Right cardiac atrium (tissue), 5 donors: ENCODE measurements at regions of chr11 and their contacts with region 1.

Region 1: DNA sequence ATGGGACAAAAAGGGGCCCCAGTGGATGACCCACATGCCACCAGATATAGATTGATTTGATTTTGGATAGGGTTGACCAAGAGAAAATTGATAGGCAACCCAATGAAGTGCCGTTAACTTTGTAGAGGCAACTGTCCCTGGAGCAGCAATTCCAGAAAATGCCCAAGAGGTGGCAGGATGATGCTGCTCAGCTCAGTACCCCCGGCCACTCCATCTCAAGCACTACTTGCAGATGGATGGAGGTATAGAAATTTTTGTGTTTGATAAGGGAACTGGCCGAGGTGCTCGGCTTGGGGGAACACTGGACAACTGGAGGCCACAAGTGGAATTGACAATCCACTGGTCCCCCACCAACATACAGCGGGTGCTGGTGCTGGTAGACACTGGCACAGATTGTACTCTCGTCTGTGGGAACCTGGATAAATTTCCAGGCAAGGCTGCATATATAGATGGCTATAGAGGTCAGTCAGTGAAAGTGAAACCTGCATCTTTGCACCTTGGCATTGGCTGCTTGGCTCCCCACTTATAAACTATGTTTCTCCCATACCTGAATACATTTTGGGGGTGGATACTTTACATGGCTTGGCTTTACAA is 86.3 kb downstream of the CCDC83 start:
- DNase-seq: peak; percentile 41 to 71 (median 53)
- ATAC-seq: peak; percentile 75 to 77
- H3K4me3 ChIP-seq: no peak overlapping the region
- H3K27ac ChIP-seq: no peak overlapping the region
- H3K4me1 ChIP-seq: peaks cover 3% of the 10 kb centered on the region
- H3K27me3 ChIP-seq: no peaks in the 10 kb centered on the region

Region 2: DNA sequence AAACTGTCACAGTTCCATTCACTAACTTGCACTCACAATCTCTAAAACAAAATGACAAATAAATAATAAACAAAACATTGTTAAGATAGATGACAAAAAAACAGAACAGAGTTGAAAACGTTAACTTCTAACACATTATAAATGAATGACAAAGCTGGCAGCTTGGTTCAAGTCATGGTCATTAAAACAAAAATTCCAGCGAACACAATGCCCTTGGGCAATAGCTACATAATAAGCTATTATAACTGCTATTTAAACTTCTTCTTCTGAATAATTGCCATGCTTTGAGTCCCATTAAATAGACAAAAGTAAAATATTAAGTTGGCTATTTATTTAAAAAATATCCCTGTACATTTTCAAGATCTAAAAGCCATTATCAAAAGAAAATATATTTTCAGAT is 72.7 kb after region 1 on chr11:
- intact Hi-C with region 1: loop called in 1 of 4 experiments (anchors 10 kb)
- DNase-seq: no peak
- ATAC-seq: no peak
- H3K4me3 ChIP-seq: no peak overlapping the region
- H3K27ac ChIP-seq: no peak overlapping the region
- H3K4me1 ChIP-seq: no peaks in the 10 kb centered on the region
- H3K27me3 ChIP-seq: no peaks in the 10 kb centered on the region

Region 3: DNA sequence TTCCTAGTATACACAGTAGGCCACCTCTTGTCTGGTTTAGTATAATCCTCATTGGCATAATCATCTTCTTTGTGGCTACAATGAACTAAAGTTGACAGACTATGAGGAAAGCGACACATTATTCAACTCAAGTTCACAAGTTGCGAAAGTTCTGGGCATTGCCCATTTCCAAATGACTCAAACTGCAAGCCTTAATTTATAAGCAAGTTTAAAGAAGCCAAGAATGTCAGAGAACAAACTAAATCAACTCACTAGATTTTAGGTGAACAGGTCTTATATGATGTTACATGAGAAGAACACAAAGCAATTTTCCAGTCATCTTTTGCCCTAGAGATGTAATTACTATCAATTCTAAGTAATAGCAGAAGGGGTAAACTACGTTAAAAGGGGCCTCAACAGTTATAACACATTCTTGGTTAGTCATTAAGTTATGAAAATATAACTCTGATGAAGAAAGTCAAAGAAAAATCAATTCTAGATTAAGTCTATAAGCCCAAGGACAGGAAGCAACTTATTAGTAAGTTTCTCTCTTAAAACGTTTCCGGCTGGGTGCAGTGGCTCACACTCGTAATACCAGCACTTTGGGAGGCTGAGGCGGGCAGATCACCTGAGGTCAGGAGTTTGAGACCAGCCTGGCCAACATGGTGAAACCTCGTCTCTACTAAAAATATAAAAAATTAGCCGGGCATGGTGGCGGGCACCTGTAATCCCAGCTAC is 106.0 kb after region 1 on chr11:
- intact Hi-C with region 1: no loop called
- DNase-seq: no peak
- ATAC-seq: no peak
- H3K4me3 ChIP-seq: no peak overlapping the region
- H3K27ac ChIP-seq: no peak overlapping the region
- H3K4me1 ChIP-seq: peaks cover 11% of the 10 kb centered on the region
- H3K27me3 ChIP-seq: no peaks in the 10 kb centered on the region

Region 4: GRCh38 chr11:86218125-86219084 is 276.9 kb after region 1 on chr11:
- intact Hi-C with region 1: loop called (anchors 2 to 10 kb)
- DNase-seq: peak; percentile 59 to 84 (median 73)
- ATAC-seq: peak; percentile 90 to 91
- H3K4me3 ChIP-seq: peak overlapping the region; percentile 50
- H3K27ac ChIP-seq: no peak overlapping the region
- H3K4me1 ChIP-seq: no peaks in the 10 kb centered on the region
- H3K27me3 ChIP-seq: no peaks in the 10 kb centered on the region

Region 5: DNA sequence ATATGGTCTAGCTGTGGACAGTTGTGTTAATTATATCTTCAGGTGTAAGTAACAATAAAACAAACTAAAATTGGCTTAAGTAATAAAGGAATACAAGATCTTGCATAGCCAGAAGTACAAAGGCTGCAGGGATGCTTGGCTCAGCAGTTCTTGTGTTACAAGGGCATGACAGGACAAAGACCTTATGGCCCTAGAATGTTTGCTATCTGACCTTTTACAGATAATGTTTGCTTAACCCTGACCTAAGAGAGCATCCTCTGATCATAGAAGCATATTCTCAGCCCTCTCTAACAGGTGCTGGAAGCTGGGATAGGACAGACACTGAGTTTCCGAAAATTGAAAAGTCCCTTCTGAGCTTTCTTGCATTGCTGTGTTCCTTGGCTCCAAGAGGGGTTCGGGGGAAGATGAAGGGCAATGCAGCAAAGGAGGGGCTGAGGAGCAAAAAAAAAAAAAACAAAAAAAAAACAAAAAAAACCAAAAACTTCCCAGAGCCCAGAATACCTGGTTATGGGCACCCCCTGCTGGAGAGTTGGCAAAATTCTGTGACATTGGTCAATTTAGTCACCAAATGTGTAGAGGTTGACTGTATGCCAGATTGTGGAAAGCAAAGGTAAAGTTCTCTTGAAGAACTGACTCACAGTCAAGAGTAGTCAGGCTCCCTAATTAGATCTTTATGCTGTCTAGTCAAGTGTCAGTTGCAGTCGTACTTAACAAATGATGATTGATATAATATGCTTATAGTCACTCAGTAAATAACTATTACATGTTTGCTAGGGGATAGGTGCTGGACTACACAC is 350.2 kb after region 1 on chr11:
- intact Hi-C with region 1: loop called in 1 of 4 experiments (anchors 5 kb)
- DNase-seq: peak in 1 of 3 donors; percentile 71
- ATAC-seq: no peak
- H3K4me3 ChIP-seq: no peak overlapping the region
- H3K27ac ChIP-seq: no peak overlapping the region
- H3K4me1 ChIP-seq: no peaks in the 10 kb centered on the region
- H3K27me3 ChIP-seq: no peaks in the 10 kb centered on the region